Left ventricle myocardium inferior (tissue), 1 donor: ENCODE measurements at regions of chr2 and their contacts with region 1.

Region 1: GRCh38 chr2:12733846-12734245 is 17.1 kb downstream of the TRIB2 start:
- DNase-seq: peak; percentile 75
- H3K4me3 ChIP-seq: peak overlapping the region; percentile 16
- H3K27ac ChIP-seq: peak overlapping the region; percentile 99
- H3K4me1 ChIP-seq: peaks cover 100% of the 10 kb centered on the region
- H3K27me3 ChIP-seq: no peaks in the 10 kb centered on the region
- CTCF ChIP-seq: no peak

Region 2: GRCh38 chr2:12797815-12798214 is 64.0 kb after region 1 on chr2:
- intact Hi-C with region 1: loop called (anchors 10 kb)
- DNase-seq: no peak
- H3K4me3 ChIP-seq: no peak overlapping the region
- H3K27ac ChIP-seq: peak overlapping the region; percentile 76
- H3K4me1 ChIP-seq: peaks cover 19% of the 10 kb centered on the region
- H3K27me3 ChIP-seq: no peaks in the 10 kb centered on the region
- CTCF ChIP-seq: no peak